Posterior cingulate gyrus (tissue), 11 donors: ENCODE measurements at regions of chr1 and their contacts with region 1.

Region 1: DNA sequence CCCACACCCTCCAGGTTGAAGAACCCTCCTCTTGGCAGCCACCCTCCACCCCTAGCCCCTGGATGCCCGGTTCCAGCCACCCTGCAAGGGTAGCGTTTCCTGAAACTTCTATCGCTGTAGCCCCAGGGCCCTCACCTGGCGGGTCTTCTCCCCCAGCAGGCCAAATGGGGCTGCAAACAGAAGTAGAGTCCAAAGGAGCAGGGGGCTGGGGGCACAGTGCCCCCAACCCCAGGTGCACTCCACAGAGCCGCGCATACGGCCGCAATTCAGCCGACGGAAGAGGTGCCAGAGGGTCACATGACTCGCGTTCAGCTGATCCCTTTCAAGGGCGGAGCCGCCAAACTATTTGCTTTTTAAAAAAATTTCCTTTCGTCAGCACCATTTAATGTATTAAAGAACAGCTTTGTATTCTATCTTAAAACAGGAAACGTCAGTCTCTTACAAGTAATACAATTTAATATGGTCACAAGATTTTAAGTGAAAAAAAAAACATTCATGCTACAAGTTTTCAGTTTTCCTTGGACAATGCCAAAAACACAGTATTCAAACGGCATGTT is at the start of gene GLMP:
- DNase-seq: peak in 9 of 10 donors; percentile 62 to 94 (median 69)

Region 2: GRCh38 chr1:156096640-156097391 is 198.7 kb before region 1 on chr1:
- intact Hi-C with region 1: no loop called
- DNase-seq: peak; percentile 77 to 98 (median 91)

Region 3: GRCh38 chr1:156233426-156234127 is 61.9 kb before region 1 on chr1:
- intact Hi-C with region 1: loop called (anchors 10 kb)
- DNase-seq: peak in 3 of 10 donors; percentile 1 to 27 (median 19)